ENCODE measurements at regions of chr6 and their contacts with region 1.

Region 1: DNA sequence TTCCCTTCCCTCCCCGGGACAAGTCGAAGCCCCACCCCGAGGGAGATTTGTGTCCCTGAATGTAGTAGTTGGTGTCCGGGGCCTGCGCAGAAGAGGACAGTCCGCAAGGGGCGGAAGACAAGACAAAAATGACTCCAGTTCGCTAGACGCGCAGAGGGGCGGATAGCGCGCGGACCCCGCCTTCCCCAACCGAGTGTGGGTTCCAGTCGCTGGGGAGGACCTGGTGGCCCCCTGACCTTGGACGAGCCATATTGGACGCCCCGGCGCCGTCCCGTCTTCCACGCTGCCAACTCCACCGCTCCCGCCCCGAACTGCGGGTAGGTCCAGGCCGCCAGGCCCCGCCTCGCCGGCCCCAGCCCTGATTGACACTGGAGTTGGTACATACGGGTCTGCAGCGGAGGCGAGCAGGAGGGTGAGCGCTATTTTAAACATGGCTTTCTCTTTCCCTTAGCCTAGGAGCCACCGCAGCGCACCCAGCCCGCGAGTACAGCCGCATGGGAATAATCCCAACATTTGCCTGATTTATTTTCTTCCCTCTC is 802 bp downstream of the HMGN3 start:
- DNase-seq: peak; percentile 93
- H3K4me3 Mint-ChIP-seq: peak overlapping the region; percentile 92
- H3K27ac Mint-ChIP-seq: peak overlapping the region; percentile 94
- H3K4me1 Mint-ChIP-seq: peaks cover 21% of the 10 kb centered on the region
- H3K27me3 Mint-ChIP-seq: peaks cover 2% of the 10 kb centered on the region

Region 2: GRCh38 chr6:78867370-78868040 is 366.2 kb before region 1 on chr6 and contains the start of gene IRAK1BP1:
- intact Hi-C with region 1: loop called (anchors 1 kb)
- DNase-seq: peak; percentile 95
- H3K4me3 Mint-ChIP-seq: peak within 1 kb of the TSS; percentile 97
- H3K27ac Mint-ChIP-seq: peak within 1 kb of the TSS; percentile 97
- H3K4me1 Mint-ChIP-seq: peaks cover 22% of the 10 kb centered on the region
- H3K27me3 Mint-ChIP-seq: peaks cover 4% of the 10 kb centered on the region
- total RNA-seq, gene IRAK1BP1: 3.4 and 3.6 TPM in 2 replicates

Region 3: GRCh38 chr6:80903711-80904110 is 1670.0 kb after region 1 on chr6:
- intact Hi-C with region 1: no loop called
- DNase-seq: no peak
- H3K4me3 Mint-ChIP-seq: no peak overlapping the region
- H3K27ac Mint-ChIP-seq: no peak overlapping the region
- H3K4me1 Mint-ChIP-seq: no peaks in the 10 kb centered on the region
- H3K27me3 Mint-ChIP-seq: no peaks in the 10 kb centered on the region